Motor neuron (in vitro differentiated cells): ENCODE measurements at regions of chr7 and their contacts with region 1.

Region 1: GRCh38 chr7:85023045-85023712 is 163.7 kb downstream of the SEMA3D start:
- ATAC-seq: no peak
- H3K4me3 ChIP-seq: no peak overlapping the region
- H3K27ac ChIP-seq: no peak overlapping the region
- H3K4me1 ChIP-seq: peaks cover 0 to 5% of the 10 kb centered on the region in 2 donors

Region 2: GRCh38 chr7:83936056-83936708 is 1087.0 kb before region 1 on chr7:
- in situ Hi-C with region 1: loop called in 3 of 9 experiments (anchors 10 to 25 kb)
- ATAC-seq: peak; percentile 56 to 83 (median 72)
- H3K4me3 ChIP-seq: no peak overlapping the region
- H3K27ac ChIP-seq: no peak overlapping the region
- H3K4me1 ChIP-seq: no peaks in the 10 kb centered on the region

Region 3: GRCh38 chr7:83976295-83976694 is 1046.9 kb before region 1 on chr7:
- in situ Hi-C with region 1: loop called in 6 of 9 experiments (anchors 10 to 25 kb)
- ATAC-seq: peak in 4 of 8 experiments; percentile 38 to 74 (median 46)
- H3K4me3 ChIP-seq: no peak overlapping the region
- H3K27ac ChIP-seq: no peak overlapping the region
- H3K4me1 ChIP-seq: no peaks in the 10 kb centered on the region

Region 4: GRCh38 chr7:84372155-84372621 is 651.0 kb before region 1 on chr7:
- in situ Hi-C with region 1: loop called in 1 of 9 experiments (anchors 25 kb)
- ATAC-seq: peak in 1 of 8 experiments; percentile 37
- H3K4me3 ChIP-seq: no peak overlapping the region
- H3K27ac ChIP-seq: no peak overlapping the region
- H3K4me1 ChIP-seq: no peaks in the 10 kb centered on the region

Region 5: DNA sequence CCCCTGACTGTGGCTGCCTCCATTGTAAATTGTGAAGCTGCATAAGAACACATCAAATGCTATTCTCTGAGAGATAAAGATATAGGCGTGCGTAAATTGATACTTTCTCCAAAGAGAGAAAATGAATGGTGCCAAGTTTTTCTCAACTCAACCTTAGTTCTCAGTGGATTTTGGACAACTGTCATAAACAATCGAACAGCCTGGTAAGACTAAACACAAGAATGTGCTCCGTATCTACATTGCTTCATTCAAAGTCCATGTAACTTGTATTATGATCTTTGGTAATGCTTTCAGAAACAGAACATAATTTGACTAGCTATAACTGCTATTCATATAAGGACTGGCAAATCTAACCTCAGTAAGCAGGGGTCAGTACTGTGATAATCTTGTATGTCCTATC is 265.4 kb before region 1 on chr7:
- in situ Hi-C with region 1: loop called in 1 of 9 experiments (anchors 25 kb)
- ATAC-seq: no peak
- H3K4me3 ChIP-seq: no peak overlapping the region
- H3K27ac ChIP-seq: no peak overlapping the region
- H3K4me1 ChIP-seq: no peaks in the 10 kb centered on the region